ENCODE measurements at regions of chr3 and their contacts with region 1.

Region 1: GRCh38 chr3:194231929-194232842 is 96.2 kb downstream of the HES1 start:
- DNase-seq: no peak
- H3K4me3 ChIP-seq: no peak overlapping the region
- H3K27ac ChIP-seq: no peak overlapping the region
- H3K4me1 ChIP-seq: no peaks in the 10 kb centered on the region
- H3K27me3 ChIP-seq: no peaks in the 10 kb centered on the region
- CTCF ChIP-seq: no peak
- EP300 ChIP-seq: no peak
- POLR2A ChIP-seq: no peak

Region 2: DNA sequence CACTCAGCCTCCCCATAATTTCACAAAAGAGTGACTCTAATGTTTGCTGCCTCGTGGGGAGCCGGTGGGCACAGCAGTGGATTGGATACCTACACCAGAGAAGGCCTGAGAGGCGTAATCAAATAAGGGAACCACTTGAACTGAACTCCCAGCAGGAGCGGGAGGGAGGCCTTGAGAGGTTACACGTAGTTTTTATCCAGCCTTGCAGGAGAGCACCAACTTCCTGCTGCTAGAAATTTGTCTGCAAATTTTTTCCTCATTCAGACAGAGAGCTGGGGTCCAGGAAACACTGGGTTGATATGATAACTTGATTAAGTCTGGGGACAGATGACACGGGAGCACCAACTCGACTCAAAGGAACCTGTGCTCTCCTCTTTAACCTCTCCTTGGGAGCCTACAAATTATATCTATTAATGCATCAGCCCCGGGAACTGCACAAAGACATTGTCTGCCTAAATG is 26.5 kb before region 1 on chr3:
- intact Hi-C with region 1: loop called in 1 of 4 experiments (anchors 1 kb)
- DNase-seq: no peak
- H3K4me3 ChIP-seq: no peak overlapping the region
- H3K27ac ChIP-seq: no peak overlapping the region
- H3K4me1 ChIP-seq: peaks cover 1% of the 10 kb centered on the region
- H3K27me3 ChIP-seq: no peaks in the 10 kb centered on the region
- CTCF ChIP-seq: no peak
- EP300 ChIP-seq: no peak
- POLR2A ChIP-seq: no peak